AG04449 (cell line): ENCODE measurements at regions of chr12 and their contacts with region 1.

Region 1: DNA sequence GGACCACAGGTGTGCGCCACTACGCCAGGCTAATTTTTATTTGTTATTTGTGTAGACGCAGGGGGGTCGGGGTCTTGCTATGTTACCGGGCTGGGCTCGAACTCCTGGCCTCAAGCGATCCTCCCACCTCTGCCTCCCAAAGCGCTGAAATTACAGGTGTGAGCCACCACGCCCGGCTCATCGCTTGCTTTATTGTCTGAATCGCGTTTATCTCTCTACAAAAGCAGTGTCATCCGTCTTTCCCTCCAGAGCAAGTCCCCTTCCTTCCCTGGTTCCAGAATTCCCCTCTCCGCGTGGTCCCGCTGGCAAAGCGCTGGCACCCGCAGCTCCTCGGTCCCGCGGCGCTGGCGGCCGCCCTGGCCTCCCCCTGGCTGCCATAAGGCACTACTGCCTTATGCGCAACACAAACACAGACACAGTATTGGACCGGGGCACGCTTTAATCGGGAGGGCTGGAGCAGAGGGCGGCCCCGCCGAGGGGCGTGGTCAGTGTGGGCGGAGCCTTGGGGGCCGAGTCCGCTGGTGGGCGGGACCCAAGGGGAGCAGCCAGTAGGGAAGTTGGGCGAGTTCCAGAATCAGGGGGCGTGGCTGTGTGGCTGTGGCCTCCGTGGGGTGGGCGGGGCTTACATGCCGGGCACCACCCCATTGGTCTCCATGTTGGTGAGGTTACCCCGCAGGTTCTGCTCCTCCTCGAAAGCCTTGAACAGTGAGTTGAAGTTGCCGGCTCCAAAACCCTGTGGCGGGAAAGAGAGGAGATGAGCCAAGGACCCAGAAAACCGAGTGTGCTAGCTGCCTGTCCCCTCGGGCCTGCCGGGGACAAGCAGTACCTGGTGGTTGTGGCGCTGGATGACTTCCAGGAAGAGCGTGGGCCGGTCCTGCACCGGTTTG is 19.3 kb downstream of the HPD start:
- DNase-seq: peak; percentile 65
- H3K4me3 ChIP-seq: peak overlapping the region; percentile 73
- CTCF ChIP-seq: peak; percentile 54

Region 2: GRCh38 chr12:121773011-121773777 is 66.2 kb before region 1 on chr12:
- CTCF ChIA-PET with region 1: interaction called, 10 read pairs
- POLR2A ChIA-PET with region 1: no interaction called
- DNase-seq: no peak
- H3K4me3 ChIP-seq: no peak overlapping the region
- CTCF ChIP-seq: peak; percentile 88

Region 3: DNA sequence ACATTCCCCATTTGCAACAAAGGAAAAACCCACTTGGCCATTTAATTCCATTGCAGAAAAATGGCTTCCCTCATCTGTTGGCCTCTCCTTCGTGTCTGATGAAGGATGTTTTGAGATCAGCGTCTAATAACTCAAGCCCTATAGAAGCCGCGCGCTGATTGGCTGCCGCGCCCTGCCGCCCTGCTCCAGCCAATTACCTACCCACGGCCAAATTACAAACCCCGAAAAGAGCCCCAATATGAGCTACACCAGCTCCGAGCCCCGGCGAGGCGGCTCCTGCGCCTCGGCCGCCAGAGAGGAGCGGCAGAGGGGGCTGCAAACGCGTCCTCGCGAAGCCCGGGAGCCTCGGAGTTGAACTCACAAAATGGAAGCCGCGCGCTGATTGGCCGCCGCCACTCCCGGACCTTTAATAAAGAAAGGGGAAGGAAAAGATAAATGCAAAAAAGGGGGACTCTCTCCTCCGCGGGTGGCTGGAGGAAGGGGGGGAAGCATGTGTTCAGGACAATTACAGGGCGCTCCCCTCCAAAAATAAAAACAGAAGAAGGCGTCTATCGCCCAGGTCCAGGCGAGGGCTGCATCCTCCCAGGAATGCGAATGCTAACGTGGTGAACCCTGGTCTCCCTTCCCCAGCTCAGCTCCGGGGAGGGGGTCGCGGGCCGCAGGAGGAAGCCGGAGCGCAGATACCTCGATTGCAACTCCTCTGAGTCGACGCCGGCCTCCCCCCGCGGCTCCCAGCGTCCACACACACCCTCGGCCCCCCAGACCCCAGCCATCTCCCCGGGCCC is 36.3 kb before region 1 on chr12:
- CTCF ChIA-PET with region 1: interaction called, 11 read pairs
- POLR2A ChIA-PET with region 1: interaction called, 3 read pairs
- DNase-seq: peak; percentile 81
- H3K4me3 ChIP-seq: peak overlapping the region; percentile 69
- CTCF ChIP-seq: no peak

Region 4: DNA sequence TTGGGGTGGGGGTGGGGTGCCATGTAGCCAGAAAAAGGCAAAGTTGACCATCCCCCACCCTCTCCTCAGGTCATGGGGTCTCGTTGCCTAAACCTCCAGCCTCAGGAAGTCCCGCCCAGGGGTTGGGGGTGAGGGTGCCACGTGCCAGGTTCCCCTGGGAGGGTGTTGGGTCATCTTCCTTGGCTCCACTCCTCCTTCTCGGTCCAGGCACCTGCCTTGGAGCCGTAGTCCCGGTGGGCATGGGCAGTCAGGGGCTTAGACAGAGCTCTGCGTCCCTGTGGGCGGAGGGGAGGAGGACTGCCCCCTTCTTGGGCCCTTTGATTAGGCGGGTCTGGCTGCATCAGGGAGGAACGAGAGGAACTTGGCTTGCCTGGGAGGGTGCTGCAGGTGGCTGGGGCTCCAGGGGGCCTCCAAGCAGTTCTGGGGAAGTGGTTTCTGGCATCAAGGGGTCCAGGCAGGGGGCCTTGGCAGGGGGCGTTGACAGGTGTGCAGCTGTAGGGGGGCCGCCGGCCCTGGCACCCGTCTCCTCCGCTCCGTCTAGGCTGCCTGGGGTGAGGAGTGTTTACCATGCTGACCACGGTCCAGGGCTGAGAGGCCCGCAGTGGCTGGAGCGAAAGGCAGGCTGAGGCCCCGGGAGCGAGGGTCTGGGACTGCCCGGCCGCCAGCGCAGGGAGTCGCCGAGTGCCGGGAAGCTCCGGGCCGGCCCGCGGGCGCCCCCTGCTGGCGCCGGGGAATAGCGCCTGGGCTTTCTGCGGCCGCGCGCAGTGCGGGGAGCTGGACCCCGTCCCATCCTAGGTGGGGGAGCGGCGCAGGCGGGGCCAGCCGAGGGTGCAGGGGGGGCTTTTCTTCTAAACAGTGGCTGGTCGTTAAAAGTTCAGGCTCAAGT is 27.7 kb before region 1 on chr12:
- CTCF ChIA-PET with region 1: interaction called, 35 read pairs
- POLR2A ChIA-PET with region 1: no interaction called
- DNase-seq: no peak
- H3K4me3 ChIP-seq: peak overlapping the region; percentile 72
- CTCF ChIP-seq: peak; percentile 83

Region 5: GRCh38 chr12:121823101-121823726 is 16.1 kb before region 1 on chr12:
- CTCF ChIA-PET with region 1: interaction called, 33 read pairs
- POLR2A ChIA-PET with region 1: no interaction called
- DNase-seq: no peak
- H3K4me3 ChIP-seq: no peak overlapping the region
- CTCF ChIP-seq: peak; percentile 12

Region 6: DNA sequence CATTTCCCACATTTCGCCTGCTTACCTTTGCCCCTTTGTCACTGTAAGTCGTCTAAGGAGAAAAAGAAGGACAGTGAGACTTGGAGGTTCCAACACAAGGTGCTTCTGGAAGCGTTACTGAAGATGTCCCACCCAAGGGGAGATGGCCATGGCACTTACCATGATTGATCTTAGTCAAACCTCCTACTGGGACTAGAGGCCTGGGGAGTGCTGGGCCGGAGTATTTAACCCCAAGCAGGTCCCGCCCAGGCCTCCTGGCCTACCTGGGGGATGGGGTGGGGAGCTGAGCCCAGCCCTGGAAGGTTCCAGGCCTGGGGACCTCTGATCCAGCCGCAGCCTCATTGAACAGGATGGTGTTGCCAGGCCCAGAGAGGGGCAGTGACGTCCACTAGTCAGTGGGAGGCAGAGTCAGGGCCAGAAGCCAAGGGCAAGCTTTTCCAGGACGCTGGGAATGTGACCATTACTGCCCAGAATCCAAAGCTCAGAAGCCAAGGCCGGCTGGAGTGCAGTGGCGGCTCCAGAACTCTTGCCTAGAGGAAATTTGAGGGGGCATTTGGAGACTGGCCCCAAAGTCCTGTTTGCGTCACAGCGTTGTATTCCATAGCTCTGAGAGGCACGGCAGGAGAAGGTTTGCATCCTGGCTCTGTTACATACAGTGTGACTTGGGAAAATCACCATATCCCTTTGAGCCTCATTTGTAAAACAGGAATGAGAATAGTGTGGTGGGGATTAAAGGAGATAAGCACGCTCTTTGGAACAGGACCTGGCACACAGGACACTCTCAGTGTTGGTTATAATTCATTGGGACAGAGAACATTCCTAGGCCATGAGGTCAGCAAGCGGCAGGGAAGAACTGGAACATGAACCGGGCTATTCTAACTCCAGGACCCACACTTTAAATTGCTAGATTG is 19.6 kb after region 1 on chr12 and contains the start of gene HPD:
- CTCF ChIA-PET with region 1: interaction called, 16 read pairs
- POLR2A ChIA-PET with region 1: no interaction called
- DNase-seq: no peak
- H3K4me3 ChIP-seq: no peak within 1 kb of the TSS
- CTCF ChIP-seq: no peak

Region 7: DNA sequence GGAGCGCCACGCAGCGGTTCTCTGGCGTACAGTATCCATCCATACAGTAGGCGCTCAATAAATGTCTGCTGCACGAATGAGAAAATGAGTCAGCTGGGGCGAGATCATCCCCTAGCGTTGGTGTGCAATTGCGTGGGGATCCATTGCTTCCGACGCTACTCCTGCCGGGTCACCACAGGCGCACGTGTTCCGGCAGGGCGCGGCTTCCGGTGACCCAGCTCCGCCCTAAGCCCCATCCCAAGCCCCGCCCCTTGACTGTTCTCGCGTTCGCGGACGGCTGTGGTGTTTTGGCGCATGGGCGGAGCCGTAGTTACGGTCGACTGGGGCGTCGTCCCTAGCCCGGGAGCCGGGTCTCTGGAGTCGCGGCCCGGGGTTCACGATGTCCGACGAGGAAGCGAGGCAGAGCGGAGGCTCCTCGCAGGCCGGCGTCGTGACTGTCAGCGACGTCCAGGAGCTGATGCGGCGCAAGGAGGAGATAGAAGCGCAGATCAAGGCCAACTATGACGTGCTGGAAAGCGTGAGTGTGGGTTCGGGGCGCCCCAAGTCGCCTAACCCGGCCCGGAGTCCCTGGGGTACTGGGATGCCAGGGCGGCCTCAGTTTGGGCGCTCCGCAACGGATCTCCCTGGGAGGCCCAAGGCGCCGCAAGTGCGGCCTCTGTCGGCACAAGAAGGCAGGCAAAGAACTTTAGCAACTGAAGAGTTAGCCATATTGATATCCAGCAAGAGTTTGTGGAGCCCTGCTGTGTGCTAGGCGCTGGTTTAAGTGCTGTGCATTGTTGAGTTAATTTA is 49.3 kb after region 1 on chr12 and contains the start of gene PSMD9:
- CTCF ChIA-PET with region 1: interaction called, 18 read pairs
- POLR2A ChIA-PET with region 1: interaction called, 4 read pairs
- DNase-seq: peak; percentile 79
- H3K4me3 ChIP-seq: peak within 1 kb of the TSS; percentile 99
- CTCF ChIP-seq: peak; percentile 80

Region 8: DNA sequence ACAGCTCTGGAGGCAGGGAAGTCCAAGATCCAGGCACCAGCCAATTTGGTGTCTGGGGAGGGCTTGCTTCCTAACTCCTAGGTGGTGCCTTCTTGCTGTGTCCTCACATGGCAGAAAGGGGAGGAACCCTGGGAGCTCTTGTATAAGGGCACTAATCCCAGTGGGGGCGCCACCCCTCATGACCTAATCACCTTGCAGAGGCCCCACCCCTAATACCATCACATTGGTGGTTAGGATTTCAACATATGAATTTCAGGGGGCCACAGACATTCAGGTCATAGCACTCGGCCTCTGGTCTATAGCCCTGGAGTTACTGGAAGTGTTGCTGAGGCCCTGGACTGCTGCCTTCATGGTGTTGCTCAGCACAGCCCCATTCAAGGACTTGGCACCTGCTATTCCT is 63.9 kb after region 1 on chr12:
- CTCF ChIA-PET with region 1: no interaction called
- POLR2A ChIA-PET with region 1: no interaction called
- DNase-seq: no peak
- H3K4me3 ChIP-seq: no peak overlapping the region
- CTCF ChIP-seq: no peak